GM12878 (cell line): ENCODE measurements at regions of chr3 and their contacts with region 1.

Region 1: DNA sequence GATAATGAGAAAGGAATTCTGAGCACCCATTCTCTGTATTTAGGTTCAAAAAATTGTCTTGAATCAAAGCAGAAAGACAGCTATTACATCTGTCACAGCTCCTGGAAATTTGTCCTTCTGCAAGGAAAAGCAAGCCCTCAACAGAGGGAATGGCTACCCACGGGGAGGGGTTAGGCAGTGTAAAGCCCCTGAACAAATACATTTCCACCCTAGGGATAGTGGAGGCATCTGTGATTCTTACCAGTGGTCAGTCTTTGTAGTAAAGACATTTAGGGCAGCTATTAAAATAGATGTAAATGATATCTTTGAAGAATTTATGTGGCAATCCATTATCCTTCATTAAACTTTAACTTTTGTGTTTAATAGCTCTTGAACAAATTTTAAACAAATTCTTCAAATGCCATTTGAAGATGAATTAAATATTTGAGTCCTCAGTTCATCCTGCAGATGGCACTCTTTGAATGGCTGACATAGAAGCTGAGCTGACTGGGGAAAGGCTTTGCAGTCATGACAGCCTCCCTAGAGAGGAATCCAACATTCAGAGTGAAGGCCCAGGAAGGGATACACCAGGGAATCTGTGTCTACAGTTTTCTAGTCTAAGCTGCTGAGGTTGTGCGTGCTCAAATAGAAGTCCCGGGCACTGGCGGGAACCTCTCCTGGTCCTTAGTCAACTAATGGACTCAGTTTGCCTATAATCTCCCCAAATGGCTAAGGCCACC is 359.7 kb upstream of the ROPN1 start:
- DNase-seq: no peak
- ATAC-seq: peak; percentile 45; the same call in 1 of the 3 replicates
- H3K4me3 ChIP-seq: no peak overlapping the region
- H3K27ac ChIP-seq: no peak overlapping the region
- H3K4me1 ChIP-seq: no peaks in the 10 kb centered on the region
- H3K27me3 ChIP-seq: no peaks in the 10 kb centered on the region; a peak in 1 of 4 replicates
- CTCF ChIP-seq: peak; percentile 33 to 57 (median 44); a peak in 5 of 6 replicates
- EP300 ChIP-seq: no peak
- POLR2A ChIP-seq: no peak
- RAD21 ChIP-seq: peak; percentile 87

Region 2: DNA sequence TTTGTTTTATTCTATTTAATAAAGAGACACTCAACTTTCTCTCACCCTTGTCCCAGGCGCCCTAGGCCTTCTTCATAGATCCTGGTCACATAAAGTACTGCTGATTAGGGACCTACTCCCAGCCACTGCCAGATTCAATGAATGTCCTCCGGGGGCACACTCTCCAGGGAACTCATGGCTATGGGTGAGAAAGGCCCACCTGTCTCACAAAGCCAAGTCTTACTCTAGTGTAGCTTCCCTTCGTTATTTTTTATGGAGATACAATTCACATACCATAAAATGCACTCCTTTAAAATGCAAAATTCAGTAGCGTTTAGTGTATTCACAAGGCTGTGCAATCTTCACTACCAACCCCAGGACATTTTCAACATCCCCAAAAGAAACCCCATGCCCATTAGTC is 990.5 kb before region 1 on chr3:
- CTCF ChIA-PET with region 1: no interaction called
- POLR2A ChIA-PET with region 1: no interaction called
- RAD21 ChIA-PET with region 1: no interaction called
- SMC1A ChIA-PET with region 1: no interaction called
- in situ Hi-C with region 1: no loop called
- intact Hi-C with region 1: no loop called
- DNase-seq: no peak
- ATAC-seq: no peak
- H3K4me3 ChIP-seq: no peak overlapping the region
- H3K27ac ChIP-seq: no peak overlapping the region
- H3K4me1 ChIP-seq: no peaks in the 10 kb centered on the region
- H3K27me3 ChIP-seq: no peaks in the 10 kb centered on the region; a peak in 1 of 4 replicates
- CTCF ChIP-seq: 0 out of 6 replicates have a peak, but pooled peaks of 1 of the 3 experiments have one; percentile 4
- EP300 ChIP-seq: no peak
- POLR2A ChIP-seq: no peak
- RAD21 ChIP-seq: no peak

Region 3: GRCh38 chr3:124260206-124260915 is 91.2 kb before region 1 on chr3:
- CTCF ChIA-PET with region 1: no interaction called
- POLR2A ChIA-PET with region 1: no interaction called
- RAD21 ChIA-PET with region 1: no interaction called
- SMC1A ChIA-PET with region 1: no interaction called
- in situ Hi-C with region 1: no loop called
- intact Hi-C with region 1: no loop called
- DNase-seq: no peak
- ATAC-seq: peak; percentile 71
- H3K4me3 ChIP-seq: no peak overlapping the region
- H3K27ac ChIP-seq: no peak overlapping the region
- H3K4me1 ChIP-seq: no peaks in the 10 kb centered on the region; the same call in 1 of the 2 replicates
- H3K27me3 ChIP-seq: no peaks in the 10 kb centered on the region
- CTCF ChIP-seq: no peak
- EP300 ChIP-seq: no peak
- POLR2A ChIP-seq: no peak
- RAD21 ChIP-seq: no peak

Region 4: GRCh38 chr3:124429129-124429815 is 77.7 kb after region 1 on chr3:
- CTCF ChIA-PET with region 1: interaction called, 11 read pairs
- POLR2A ChIA-PET with region 1: no interaction called
- RAD21 ChIA-PET with region 1: no interaction called
- SMC1A ChIA-PET with region 1: interaction called, 4 read pairs
- in situ Hi-C with region 1: no loop called
- intact Hi-C with region 1: no loop called
- DNase-seq: no peak
- ATAC-seq: no peak
- H3K4me3 ChIP-seq: no peak overlapping the region
- H3K27ac ChIP-seq: no peak overlapping the region
- H3K4me1 ChIP-seq: no peaks in the 10 kb centered on the region
- H3K27me3 ChIP-seq: no peaks in the 10 kb centered on the region; a peak in 1 of 4 replicates
- CTCF ChIP-seq: no peak
- EP300 ChIP-seq: no peak
- POLR2A ChIP-seq: no peak
- RAD21 ChIP-seq: no peak

Region 5: DNA sequence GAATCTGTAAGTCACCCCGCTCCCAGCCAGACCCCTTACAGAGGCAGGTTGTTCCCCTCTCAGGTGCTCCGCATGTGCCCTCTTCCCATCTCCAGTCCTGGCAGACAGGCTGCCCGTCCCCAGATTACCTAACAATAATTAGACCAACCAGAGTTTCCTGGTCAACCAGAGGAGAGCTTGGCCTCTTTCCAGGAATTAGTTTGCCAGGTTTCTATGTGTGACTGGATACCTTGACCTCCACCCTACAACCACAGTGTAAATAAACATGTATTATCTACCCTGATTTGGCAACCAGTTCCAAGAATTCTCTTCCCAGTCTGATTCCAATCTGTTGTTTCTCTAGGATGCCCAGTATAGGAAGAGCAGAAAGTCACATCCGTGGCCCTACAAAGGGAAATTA is 200.7 kb after region 1 on chr3:
- CTCF ChIA-PET with region 1: interaction called, 36 read pairs
- POLR2A ChIA-PET with region 1: no interaction called
- RAD21 ChIA-PET with region 1: interaction called, 4 read pairs
- SMC1A ChIA-PET with region 1: interaction called, 7 read pairs
- in situ Hi-C with region 1: loop called (anchors 5 kb)
- intact Hi-C with region 1: loop called (anchors 1 kb)
- DNase-seq: no peak
- ATAC-seq: no peak
- H3K4me3 ChIP-seq: no peak overlapping the region
- H3K27ac ChIP-seq: no peak overlapping the region
- H3K4me1 ChIP-seq: no peaks in the 10 kb centered on the region
- H3K27me3 ChIP-seq: no peaks in the 10 kb centered on the region
- CTCF ChIP-seq: no peak
- EP300 ChIP-seq: no peak
- POLR2A ChIP-seq: no peak
- RAD21 ChIP-seq: no peak